Activated CD4-positive, alpha-beta memory T cell treated with anti-CD3 and anti-CD28 coated beads, Interleukin-2, amount 10 ng/mL, durations not matched to agents 7 days and 5 days (primary cell): ENCODE measurements at regions of chrX and their contacts with region 1.

Region 1: GRCh38 chrX:37825209-37825842 is 22.0 kb downstream of the DYNLT3 start:
- DNase-seq: peak; percentile 58
- H3K4me3 Mint-ChIP-seq: no peak overlapping the region
- H3K27ac Mint-ChIP-seq: no peak overlapping the region
- H3K4me1 Mint-ChIP-seq: peaks cover 25% of the 10 kb centered on the region
- H3K27me3 Mint-ChIP-seq: no peaks in the 10 kb centered on the region

Region 2: GRCh38 chrX:37745354-37745753 is 80.0 kb before region 1 on chrX:
- CTCF ChIA-PET with region 1: interaction called, 123 read pairs
- POLR2A ChIA-PET with region 1: interaction called, 4 read pairs
- DNase-seq: peak; percentile 79
- H3K4me3 Mint-ChIP-seq: no peak overlapping the region
- H3K27ac Mint-ChIP-seq: peak overlapping the region; percentile 42
- H3K4me1 Mint-ChIP-seq: peaks cover 17% of the 10 kb centered on the region
- H3K27me3 Mint-ChIP-seq: peaks cover 3% of the 10 kb centered on the region